HepG2 (cell line): ENCODE measurements at regions of chr7 and their contacts with region 1.

Region 1: DNA sequence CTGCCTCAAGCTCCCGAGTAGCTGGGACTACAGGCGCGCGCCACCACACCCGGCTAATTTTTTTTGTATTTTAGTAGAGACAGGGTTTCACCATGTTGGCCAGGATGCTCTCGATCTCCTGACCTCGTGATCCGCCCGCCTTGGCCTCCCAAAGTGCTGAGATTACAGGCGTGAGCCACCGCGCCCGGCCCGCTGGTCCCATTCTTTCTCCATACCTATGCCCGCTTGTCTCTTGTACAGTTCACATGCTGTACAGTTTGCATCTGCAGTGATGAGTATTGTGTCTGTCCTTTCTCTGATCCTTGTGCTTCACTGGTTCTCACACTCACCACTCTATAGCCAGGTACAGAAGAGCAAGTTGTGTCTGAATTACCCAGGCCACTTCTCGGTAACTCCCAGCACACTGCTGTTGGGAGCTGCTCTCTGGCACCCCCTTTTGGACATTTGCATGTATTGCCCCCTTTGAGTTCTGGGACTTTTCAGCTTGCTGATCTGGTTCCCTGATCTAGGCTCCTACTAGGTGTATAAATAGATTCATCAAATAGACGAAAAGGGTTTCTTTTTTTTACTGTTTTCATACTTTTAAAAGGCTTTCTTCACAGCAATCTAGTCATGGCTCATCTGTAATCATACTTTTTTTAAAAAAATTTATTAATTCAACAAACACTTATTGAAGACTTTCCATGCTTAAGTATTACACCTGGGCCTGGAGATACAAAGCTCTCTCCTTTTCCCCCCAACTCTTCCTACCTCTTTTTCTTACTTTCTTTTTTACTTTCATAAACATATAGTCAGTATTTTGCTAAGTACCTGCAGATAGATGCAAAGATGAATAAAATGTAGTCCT is 53.5 kb downstream of the AOAH start:
- DNase-seq: peak; percentile 42
- ATAC-seq: peak; percentile 88
- H3K4me3 ChIP-seq: no peak overlapping the region
- H3K27ac ChIP-seq: no peak overlapping the region
- H3K4me1 ChIP-seq: no peaks in the 10 kb centered on the region
- H3K27me3 ChIP-seq: no peaks in the 10 kb centered on the region
- CTCF ChIP-seq: peak; percentile 85
- EP300 ChIP-seq: no peak
- POLR2A ChIP-seq: no peak
- RAD21 ChIP-seq: peak; percentile 42

Region 2: DNA sequence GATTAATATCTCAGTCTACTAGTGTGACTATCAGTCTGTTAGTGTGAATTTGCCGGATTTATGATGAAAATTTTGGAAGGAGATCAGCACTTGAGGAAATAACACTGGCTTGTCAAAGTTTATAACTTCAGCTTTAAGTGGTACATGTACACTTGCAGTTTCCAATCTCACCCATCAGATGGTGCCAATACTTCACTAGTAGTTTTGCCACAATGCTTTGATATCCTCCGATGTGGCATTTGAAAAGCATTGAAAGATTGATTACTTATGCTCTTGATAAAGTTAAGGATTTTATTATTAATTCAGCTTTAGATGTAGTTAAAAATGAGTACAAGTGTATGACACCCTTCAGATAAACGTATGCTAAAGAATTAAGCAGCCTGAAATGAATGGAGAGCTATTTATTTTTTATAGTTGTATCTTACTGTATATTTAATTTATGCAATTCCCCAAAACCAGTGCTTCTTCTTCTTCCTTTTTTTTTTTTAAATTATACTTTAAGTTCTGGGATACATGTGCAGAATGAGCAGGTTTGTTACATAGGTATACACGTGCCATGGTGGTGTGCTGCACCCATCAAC is 183.0 kb before region 1 on chr7:
- CTCF ChIA-PET with region 1: interaction called, 11 read pairs
- POLR2A ChIA-PET with region 1: no interaction called
- in situ Hi-C with region 1: loop called (anchors 5 kb)
- intact Hi-C with region 1: loop called (anchors 1 kb)
- DNase-seq: peak; percentile 39
- ATAC-seq: peak; percentile 26; the same call in 1 of the 3 replicates
- H3K4me3 ChIP-seq: no peak overlapping the region
- H3K27ac ChIP-seq: no peak overlapping the region
- H3K4me1 ChIP-seq: no peaks in the 10 kb centered on the region
- H3K27me3 ChIP-seq: no peaks in the 10 kb centered on the region
- CTCF ChIP-seq: peak; percentile 80
- EP300 ChIP-seq: no peak
- POLR2A ChIP-seq: no peak
- RAD21 ChIP-seq: peak; percentile 78

Region 3: GRCh38 chr7:37181550-37181932 is 510.7 kb after region 1 on chr7:
- CTCF ChIA-PET with region 1: no interaction called
- POLR2A ChIA-PET with region 1: no interaction called
- in situ Hi-C with region 1: loop called (anchors 25 kb)
- intact Hi-C with region 1: loop called (anchors 1 kb)
- DNase-seq: no peak
- ATAC-seq: no peak
- H3K4me3 ChIP-seq: no peak overlapping the region
- H3K27ac ChIP-seq: no peak overlapping the region
- H3K4me1 ChIP-seq: peaks cover 41% of the 10 kb centered on the region
- H3K27me3 ChIP-seq: no peaks in the 10 kb centered on the region
- CTCF ChIP-seq: no peak
- EP300 ChIP-seq: no peak
- POLR2A ChIP-seq: no peak
- RAD21 ChIP-seq: no peak